Endothelial cell of umbilical vein (primary cell): ENCODE measurements at regions of chr4 and their contacts with region 1.

Region 1: GRCh38 chr4:25439918-25440477 is 62.9 kb downstream of the ANAPC4 start:
- DNase-seq: peak; percentile 71
- H3K4me3 ChIP-seq: no peak overlapping the region
- H3K27ac ChIP-seq: no peak overlapping the region
- H3K4me1 ChIP-seq: peaks cover 6% of the 10 kb centered on the region
- H3K27me3 ChIP-seq: no peaks in the 10 kb centered on the region
- CTCF ChIP-seq: peak; percentile 87 to 93
- POLR2A ChIP-seq: no peak

Region 2: DNA sequence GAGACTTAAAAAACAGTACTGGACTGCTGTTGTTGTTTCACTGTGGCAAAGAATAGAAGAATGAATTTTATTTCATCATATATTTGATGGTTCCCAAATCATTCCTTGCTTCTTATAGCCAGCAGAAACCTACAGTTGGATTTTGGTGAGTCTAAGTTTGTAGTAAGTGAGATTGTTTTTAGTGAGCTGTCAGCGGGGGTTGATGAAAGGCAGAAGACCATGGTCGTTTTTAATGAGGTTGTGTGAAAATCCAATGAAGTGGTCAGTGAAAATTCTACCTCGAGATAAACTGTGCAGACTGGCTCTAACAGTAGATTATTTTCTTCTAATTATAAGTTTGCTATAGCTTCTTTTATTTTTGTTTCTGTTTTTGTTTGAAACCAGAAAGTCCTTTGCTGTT is 26.7 kb before region 1 on chr4:
- CTCF ChIA-PET with region 1: interaction called, 13 read pairs
- POLR2A ChIA-PET with region 1: no interaction called
- dilution Hi-C with region 1: no loop called
- intact Hi-C with region 1: no loop called
- DNase-seq: no peak
- H3K4me3 ChIP-seq: no peak overlapping the region
- H3K27ac ChIP-seq: no peak overlapping the region
- H3K4me1 ChIP-seq: no peaks in the 10 kb centered on the region
- H3K27me3 ChIP-seq: no peaks in the 10 kb centered on the region
- CTCF ChIP-seq: no peak
- POLR2A ChIP-seq: no peak

Region 3: GRCh38 chr4:25509646-25510045 is 69.6 kb after region 1 on chr4:
- CTCF ChIA-PET with region 1: interaction called, 9 read pairs
- POLR2A ChIA-PET with region 1: no interaction called
- dilution Hi-C with region 1: no loop called
- intact Hi-C with region 1: loop called (anchors 5 kb)
- DNase-seq: no peak
- H3K4me3 ChIP-seq: no peak overlapping the region
- H3K27ac ChIP-seq: no peak overlapping the region
- H3K4me1 ChIP-seq: no peaks in the 10 kb centered on the region
- H3K27me3 ChIP-seq: no peaks in the 10 kb centered on the region
- CTCF ChIP-seq: no peak
- POLR2A ChIP-seq: no peak

Region 4: DNA sequence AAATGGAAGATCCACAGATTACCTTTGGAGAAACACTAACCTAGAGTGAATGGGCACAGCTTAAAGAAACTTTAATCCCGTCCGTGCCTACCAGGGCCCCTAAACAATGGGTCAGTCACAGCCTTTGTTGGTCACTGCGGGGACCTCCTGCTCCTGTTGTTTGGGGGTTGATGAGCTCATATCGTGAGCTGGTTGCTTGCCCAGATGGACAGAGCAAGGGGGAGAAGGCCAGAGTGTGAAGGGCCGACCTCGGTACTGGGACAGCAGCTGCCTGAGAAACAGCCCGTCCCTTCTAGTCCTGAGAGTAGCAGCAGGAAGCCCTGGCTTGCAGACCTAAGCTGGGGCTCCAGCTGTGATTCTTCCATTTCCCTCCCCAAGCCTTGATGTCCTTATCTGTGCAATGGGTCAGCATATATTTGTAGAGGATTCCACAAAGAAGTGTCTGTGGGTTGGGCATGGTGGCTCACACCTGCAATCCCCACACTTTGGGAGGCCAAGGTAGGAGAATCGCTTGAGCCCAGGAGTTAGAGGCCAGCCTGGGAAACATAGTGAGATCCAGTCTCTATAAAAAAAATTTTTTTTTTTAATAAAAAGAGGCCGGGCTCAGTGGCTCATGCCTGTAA is 146.0 kb after region 1 on chr4:
- CTCF ChIA-PET with region 1: interaction called, 16 read pairs
- POLR2A ChIA-PET with region 1: no interaction called
- dilution Hi-C with region 1: no loop called
- intact Hi-C with region 1: no loop called
- DNase-seq: no peak
- H3K4me3 ChIP-seq: no peak overlapping the region
- H3K27ac ChIP-seq: no peak overlapping the region
- H3K4me1 ChIP-seq: no peaks in the 10 kb centered on the region
- H3K27me3 ChIP-seq: no peaks in the 10 kb centered on the region
- CTCF ChIP-seq: no peak
- POLR2A ChIP-seq: no peak

Region 5: DNA sequence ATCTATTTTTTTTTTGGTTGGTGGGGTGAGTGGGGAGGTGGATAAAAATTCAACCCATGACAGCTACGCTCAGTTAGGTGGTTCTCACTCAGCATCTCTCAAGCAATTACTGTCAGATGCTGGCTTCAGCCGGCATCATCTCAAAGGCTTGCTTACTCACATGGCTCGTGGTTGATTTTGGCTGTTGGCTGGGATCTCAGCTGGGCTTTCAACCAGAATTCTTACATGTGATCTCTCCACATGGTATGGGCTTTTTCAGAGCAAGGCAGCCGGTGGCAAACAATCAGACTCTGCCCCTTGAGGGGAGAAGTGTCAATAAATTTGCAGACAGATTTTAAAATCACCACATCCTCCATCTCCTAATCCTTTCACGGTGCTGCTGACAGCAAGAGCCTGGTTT is 262.9 kb after region 1 on chr4:
- CTCF ChIA-PET with region 1: interaction called, 13 read pairs
- POLR2A ChIA-PET with region 1: no interaction called
- dilution Hi-C with region 1: no loop called
- intact Hi-C with region 1: no loop called
- DNase-seq: no peak
- H3K4me3 ChIP-seq: no peak overlapping the region
- H3K27ac ChIP-seq: no peak overlapping the region
- H3K4me1 ChIP-seq: no peaks in the 10 kb centered on the region
- H3K27me3 ChIP-seq: no peaks in the 10 kb centered on the region
- CTCF ChIP-seq: no peak
- POLR2A ChIP-seq: no peak

Region 6: DNA sequence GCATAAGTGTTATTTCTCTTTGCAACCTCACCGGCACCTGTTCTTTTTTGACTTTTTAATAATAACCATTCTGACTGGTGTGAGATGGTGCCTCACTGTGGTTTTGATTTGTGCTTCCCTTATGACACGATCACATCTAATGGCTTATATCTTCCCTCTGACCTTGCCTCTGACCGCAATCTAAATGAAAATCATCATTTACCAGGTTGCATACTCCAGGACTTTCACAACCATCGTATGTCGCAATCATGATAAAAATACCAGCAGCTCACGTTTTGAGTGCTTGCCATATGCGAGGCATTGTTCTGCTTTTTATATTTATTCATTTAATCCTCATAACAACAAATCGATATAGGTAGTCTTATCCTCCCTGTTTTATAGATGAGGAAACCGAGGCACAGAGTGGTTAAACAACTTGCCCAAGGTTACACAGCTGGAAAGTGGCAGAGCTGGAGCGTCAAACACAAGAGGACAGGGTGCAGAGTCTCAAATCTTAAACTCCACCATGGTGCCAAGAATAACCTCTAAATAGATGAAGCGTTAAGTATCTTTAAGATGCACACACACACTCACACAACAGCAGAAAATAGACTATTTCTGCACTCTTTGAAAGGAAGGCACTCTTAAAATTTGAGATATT is 320.6 kb after region 1 on chr4:
- CTCF ChIA-PET with region 1: interaction called, 414 read pairs
- POLR2A ChIA-PET with region 1: no interaction called
- dilution Hi-C with region 1: no loop called
- intact Hi-C with region 1: no loop called
- DNase-seq: no peak
- H3K4me3 ChIP-seq: no peak overlapping the region
- H3K27ac ChIP-seq: no peak overlapping the region
- H3K4me1 ChIP-seq: no peaks in the 10 kb centered on the region
- H3K27me3 ChIP-seq: no peaks in the 10 kb centered on the region
- CTCF ChIP-seq: no peak
- POLR2A ChIP-seq: no peak

Region 7: DNA sequence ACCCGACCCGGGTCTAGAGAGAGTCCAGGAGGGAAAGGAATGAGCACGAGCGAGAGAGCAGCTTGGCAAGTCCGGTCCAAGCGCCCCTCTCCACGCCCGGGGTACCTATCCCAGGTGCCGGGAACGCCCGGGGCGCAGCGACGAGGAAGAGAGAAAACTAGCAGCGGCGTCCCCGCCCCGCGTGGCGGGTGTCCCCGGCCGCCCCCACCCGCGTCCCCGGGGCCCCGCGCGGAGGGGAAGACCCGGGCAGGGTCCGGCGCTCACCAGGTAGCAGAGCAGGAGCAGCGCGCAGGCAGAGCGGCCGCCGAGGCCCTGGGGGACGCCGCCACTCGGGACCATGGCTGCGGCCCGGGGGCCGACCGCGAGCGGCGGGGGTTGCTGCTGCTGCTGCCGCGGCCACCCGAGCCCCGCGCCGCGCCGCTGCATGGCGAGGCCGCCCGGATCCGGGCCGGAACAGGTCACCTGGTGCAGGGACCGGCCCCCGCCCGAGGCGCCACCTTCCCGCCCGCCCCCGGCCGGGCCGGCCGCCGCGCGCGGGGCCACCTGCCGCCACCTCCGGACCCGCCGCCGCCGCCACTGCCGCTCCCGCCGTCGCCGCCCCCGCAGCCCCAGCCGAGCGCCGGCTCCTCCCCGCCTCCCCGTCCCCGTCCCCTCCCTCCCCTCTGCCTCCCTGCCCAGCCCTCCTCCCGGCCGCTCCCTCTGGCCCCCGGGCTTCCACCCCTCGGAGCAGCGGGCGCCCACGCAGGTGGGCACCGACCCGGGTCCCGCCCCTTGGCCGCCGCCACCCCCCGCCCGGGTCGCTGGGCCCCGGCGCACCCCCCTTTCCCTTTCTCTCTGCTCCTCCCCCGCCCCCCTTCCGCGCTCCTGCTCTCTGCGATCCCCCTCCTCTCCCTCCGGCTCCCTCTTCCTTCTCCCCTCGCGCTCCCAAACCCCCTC is 422.7 kb after region 1 on chr4 and contains the start of gene SEL1L3:
- CTCF ChIA-PET with region 1: interaction called, 4 read pairs
- POLR2A ChIA-PET with region 1: no interaction called
- dilution Hi-C with region 1: no loop called
- intact Hi-C with region 1: loop called (anchors 2 kb)
- DNase-seq: no peak
- H3K4me3 ChIP-seq: peak within 1 kb of the TSS; percentile 52 to 92 (median 80)
- H3K27ac ChIP-seq: peak within 1 kb of the TSS; percentile 74
- H3K4me1 ChIP-seq: peaks cover 38% of the 10 kb centered on the region
- H3K27me3 ChIP-seq: no peaks in the 10 kb centered on the region
- CTCF ChIP-seq: no peak
- POLR2A ChIP-seq: no peak
- total RNA-seq, gene SEL1L3: 91.1 and 122 TPM in 2 replicates